AG04449 (cell line): ENCODE measurements at regions of chr17 and their contacts with region 1.

Region 1: GRCh38 chr17:35170968-35171771 is 23.0 kb downstream of the SLC35G3 start:
- DNase-seq: no peak
- H3K4me3 ChIP-seq: no peak overlapping the region
- CTCF ChIP-seq: no peak

Region 2: GRCh38 chr17:35210741-35211140 is 39.6 kb after region 1 on chr17:
- CTCF ChIA-PET with region 1: no interaction called
- POLR2A ChIA-PET with region 1: no interaction called
- DNase-seq: no peak
- H3K4me3 ChIP-seq: no peak overlapping the region
- CTCF ChIP-seq: no peak

Region 3: GRCh38 chr17:35529866-35530265 is 358.7 kb after region 1 on chr17:
- CTCF ChIA-PET with region 1: interaction called, 23 read pairs
- POLR2A ChIA-PET with region 1: no interaction called
- DNase-seq: no peak
- H3K4me3 ChIP-seq: no peak overlapping the region
- CTCF ChIP-seq: no peak